Right ventricle myocardium inferior (tissue), 1 donor: ENCODE measurements at regions of chr22 and their contacts with region 1.

Region 1: DNA sequence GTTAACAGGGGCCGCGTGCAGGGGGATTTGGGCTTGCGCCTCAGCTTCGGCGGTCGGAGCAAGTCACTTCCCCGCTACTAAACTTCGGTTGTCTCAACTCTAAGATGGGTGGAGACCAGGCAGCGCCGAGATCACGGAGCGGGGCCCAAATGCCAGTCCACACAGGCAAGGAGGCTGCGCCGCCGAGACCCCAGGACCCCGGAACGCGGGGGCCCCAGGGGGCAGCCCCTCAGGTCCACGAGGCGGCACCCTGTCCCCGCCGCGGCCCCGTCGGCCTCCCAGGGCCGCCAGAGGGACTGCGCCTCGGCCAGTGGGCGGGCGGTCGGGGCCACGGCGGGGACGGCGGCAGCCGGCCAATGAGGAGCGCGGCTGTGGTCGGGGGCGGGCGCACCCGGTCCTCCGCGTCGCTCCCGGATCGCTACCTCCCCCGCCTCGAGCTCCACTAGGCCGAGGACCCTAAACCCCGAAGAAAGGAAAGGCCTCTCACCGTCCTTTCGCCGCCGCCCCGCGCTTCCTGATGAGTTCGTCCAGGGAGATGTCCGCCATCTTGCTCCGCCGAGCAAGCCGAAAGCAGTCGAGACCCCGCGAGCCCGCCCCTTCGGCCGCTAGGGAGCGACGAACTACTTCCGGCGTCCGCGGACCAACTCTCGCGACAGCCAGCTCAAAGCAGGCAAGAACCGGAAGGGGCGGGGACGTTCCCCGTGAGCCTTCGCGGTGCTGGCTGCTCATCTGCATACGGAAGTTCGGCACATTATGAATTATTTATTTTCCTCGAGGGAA is at the start of gene POLDIP3:
- DNase-seq: peak; percentile 100
- ATAC-seq: peak; percentile 91
- total RNA-seq, gene POLDIP3: 39.3 TPM

Region 2: DNA sequence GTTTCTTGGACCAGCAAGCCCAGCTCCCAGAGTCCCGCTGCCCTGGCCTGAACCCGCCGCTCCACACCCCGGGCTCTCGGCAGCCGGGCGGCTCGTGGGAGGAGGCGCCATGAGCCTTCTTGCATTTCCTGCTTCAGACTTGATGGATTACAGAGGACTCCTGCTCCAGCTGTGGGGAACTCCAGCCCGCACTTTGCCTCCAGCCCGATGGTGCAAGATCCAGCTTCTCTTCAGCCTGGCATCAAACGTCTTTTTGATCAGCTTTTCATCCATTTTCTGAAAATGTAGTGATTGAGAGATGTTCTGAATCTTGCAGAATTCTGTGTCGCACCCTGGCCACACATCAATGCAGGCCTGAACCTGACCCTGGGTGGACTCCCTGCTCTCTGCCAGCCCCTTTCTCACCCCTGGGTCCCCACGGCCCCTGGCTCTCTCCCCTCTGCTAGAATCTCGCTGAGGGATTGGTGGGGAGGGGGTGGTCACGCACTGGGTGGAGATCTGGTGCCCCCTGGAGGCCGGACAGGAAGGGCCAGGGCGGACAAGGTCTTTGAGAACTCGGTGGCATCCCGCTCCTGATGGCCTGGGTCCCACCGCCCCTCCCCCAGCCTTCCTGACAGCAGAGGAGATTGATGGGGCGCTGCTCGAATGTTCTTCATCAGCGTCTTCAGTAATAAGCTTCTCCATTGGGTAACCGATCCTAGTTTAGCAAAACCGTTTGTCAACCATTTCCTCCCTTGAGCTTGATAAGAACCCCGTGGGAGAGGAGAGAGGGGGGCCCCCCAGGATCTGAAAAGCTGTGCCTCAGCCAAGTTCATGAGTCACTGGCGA is 170.2 kb before region 1 on chr22:
- intact Hi-C with region 1: no loop called
- DNase-seq: peak; percentile 90
- ATAC-seq: peak; percentile 78

Region 3: DNA sequence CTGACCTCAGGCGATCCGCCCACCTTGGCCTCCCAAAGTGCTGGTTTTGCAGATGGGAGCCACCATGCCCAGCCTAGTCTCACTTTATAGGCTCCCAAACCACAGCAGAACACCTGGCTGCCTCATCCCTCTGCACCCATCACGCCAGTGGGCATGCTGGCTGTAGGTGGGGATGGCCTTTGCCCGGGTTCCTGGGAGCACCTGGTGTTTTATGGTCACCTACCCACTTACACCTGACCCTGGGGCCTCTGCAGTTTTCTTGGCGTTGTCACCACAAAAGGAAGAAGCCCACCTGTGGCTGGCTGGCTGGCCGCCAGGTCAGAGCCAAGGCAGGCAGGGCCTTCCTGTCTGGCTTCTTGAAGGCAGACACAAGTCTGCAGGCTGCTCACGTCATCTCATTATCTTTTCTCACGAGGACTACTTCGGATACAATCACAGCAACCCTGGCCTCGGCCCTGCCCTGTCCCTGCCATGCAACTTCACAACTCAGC is 103.1 kb before region 1 on chr22:
- intact Hi-C with region 1: no loop called
- DNase-seq: no peak
- ATAC-seq: no peak

Region 4: GRCh38 chr22:42553475-42554361 is 60.8 kb before region 1 on chr22 and contains the start of gene SERHL2:
- intact Hi-C with region 1: loop called (anchors 5 kb)
- DNase-seq: peak; percentile 90
- ATAC-seq: peak; percentile 98
- total RNA-seq, gene SERHL2: 2.6 TPM

Region 5: DNA sequence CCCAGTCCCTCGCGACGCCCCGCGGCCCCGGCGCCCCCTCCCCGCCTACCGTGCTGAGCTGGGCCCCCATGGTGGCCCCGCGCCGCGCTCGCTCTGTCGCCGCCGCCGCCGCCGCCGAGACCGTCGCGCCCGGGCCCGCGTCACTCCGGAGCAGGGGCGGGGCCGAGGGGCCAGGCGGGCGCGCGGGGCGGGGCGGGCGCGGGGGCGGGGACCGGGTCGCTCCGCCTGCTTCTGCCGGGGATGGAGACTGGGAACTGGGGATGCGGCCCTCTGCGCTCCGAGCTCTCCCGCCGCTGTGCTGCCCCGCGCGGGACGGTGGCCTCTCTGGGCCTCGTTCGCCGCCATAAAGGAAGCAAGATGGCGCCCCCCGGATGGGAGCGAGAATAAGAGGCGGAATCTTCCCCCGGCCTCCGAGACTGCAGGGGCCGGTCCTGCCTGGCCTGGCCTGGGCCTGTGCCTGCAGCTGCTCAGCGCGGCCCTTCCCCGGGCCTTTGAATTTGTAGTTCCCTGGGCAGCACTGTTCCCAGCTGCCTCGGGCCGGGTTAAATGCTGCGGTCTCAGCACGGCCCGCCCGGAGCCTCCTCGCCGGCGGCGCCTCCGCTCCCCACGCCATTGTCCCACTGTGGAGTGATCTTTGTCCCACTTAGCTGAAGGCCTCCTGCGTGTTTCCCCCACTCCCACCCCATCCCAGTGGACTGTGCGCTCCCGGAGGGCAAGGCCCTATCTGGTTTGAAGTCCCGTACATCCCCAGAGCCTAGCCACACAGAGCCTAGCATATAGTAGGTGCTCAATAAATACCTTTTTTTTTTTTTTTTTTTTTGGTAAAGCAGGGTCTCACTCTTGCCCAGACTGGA is 35.0 kb after region 1 on chr22 and contains the start of gene CYB5R3:
- intact Hi-C with region 1: loop called (anchors 2 kb)
- DNase-seq: peak; percentile 93
- ATAC-seq: peak; percentile 73
- total RNA-seq, gene CYB5R3: 268 TPM